HEK293 (cell line): ENCODE measurements at regions of chr15 and their contacts with region 1.

Region 1: DNA sequence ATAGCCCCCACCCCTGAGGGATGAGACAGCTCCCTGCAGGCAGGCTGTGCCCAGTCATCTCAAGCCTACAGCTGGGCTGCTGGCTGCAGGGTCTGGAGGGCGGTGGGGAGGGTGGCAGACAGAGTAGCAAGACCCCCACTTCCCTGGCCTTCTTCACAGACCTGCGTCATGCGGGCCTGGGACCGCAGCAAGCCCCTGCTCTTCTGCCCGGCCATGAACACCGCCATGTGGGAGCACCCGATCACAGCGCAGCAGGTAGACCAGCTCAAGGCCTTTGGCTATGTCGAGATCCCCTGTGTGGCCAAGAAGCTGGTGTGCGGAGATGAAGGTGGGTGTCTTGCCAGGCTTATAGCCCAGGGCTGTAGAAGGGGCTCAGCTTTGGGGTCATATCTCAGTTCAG is 25.0 kb downstream of the PPCDC start:
- H3K4me3 ChIP-seq: no peak overlapping the region
- H3K27ac ChIP-seq: no peak overlapping the region
- H3K4me1 ChIP-seq: peaks cover 8% of the 10 kb centered on the region; the same call in 1 of the 2 replicates
- CTCF ChIP-seq: no peak

Region 2: DNA sequence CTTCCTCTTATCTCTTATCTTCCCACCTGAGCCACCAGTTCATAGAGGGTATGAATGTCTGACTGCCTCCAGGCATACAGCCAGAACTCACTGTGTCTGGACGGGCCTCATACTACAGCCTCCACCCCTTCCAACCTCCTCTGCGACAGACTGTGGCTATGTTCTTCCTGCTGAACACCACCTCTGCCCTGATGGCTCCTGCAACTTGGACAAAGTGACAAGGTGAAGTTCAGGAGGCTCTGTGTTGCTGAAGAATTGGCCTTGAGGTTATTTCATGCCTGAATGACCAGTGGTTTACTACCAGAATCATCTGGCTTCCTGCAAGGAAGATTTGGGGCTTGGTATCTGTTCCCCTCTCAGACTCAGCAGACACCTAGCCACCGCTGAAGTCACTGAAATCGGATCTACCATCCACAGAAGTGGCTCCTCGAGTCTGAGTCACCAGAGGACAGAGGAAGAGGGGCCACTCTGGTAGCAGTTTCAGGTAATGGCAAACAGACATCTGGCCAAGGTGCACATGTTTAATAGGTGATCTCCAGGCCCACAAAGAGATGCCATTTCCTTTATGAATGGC is 191.2 kb before region 1 on chr15:
- CTCF ChIA-PET with region 1: no interaction called
- POLR2A ChIA-PET with region 1: interaction called, 10 read pairs
- H3K4me3 ChIP-seq: no peak overlapping the region
- H3K27ac ChIP-seq: peak overlapping the region; percentile 42
- H3K4me1 ChIP-seq: peaks cover 14% of the 10 kb centered on the region
- CTCF ChIP-seq: no peak

Region 3: DNA sequence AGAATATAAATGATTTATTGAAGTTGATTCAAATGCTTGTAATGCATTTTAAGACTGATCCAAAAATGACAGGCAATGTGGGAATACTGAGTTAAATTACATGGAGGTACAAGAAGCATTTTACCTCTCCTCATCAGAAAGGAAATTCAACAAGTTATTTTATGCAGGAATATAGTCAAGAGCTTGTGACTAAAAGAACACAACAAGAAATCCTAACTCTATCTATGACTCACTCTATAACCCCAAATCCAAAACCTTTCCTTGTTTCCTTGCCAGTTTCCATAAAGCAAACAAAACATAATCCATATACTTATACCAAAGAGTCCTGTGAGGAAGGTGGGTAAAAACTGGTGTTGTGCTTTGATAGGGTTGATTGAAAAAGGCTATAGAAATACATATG is 372.3 kb after region 1 on chr15:
- CTCF ChIA-PET with region 1: no interaction called
- POLR2A ChIA-PET with region 1: no interaction called
- H3K4me3 ChIP-seq: no peak overlapping the region
- H3K27ac ChIP-seq: no peak overlapping the region
- H3K4me1 ChIP-seq: no peaks in the 10 kb centered on the region
- CTCF ChIP-seq: no peak